Spleen (tissue), 13 donors: ENCODE measurements at regions of chr1 and their contacts with region 1.

Region 1: DNA sequence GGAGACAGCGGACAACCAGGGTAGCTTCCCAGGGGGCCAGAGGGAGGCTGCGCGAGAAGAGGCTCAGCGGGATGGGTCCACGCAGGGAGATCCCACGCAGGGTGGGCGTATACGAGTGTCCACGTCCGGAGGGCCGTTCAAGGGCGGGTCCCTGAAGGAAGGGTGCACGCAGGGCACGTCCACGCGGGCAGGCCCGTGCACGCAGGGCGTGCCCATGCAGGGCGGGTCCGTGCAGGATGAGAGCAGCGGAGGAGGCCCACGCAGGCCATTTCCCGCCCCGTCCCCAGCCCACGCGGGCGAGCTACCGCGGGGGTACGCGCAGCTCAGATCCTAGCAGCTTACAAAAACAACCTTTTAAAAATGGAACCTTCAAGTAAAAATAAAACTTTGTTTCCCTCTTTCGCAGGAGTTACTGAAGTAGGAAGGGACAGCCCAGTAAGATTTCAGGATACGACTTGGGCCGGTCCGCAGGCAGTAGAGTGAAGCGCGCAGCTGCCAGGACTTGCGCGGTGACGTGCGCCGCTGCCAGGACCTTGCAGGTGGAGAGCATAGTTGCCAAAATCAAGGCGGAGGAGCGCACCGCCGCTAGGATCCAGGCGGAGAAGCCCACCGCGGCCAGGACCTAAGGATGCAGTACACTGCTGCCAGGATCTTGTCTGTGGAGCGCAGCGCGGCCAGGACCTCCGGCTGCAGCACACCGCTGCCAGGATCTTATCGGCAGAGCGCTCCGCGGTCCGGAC is 416 bp upstream of the RNF187 start:
- DNase-seq: peak; percentile 96
- H3K4me3 ChIP-seq: peak overlapping the region; percentile 56 to 99 (median 90)
- H3K27ac ChIP-seq: peak overlapping the region; percentile 95 to 100 (median 100)
- H3K4me1 ChIP-seq: peaks cover 19 to 58% (median 53%) of the 10 kb centered on the region in 6 donors
- H3K27me3 ChIP-seq: no peaks in the 10 kb centered on the region
- CTCF ChIP-seq: peak in 2 of 11 experiments; percentile 12 to 20
- POLR2A ChIP-seq: peak; percentile 5 to 50 (median 29)

Region 2: GRCh38 chr1:227787513-227788270 is 699.1 kb before region 1 on chr1:
- intact Hi-C with region 1: loop called (anchors 10 kb)
- DNase-seq: peak; percentile 98
- H3K4me3 ChIP-seq: peak overlapping the region; percentile 44 to 77 (median 70)
- H3K27ac ChIP-seq: peak overlapping the region in 6 of 8 donors; percentile 10 to 72 (median 66)
- H3K4me1 ChIP-seq: peaks cover 12 to 38% (median 28%) of the 10 kb centered on the region in 6 donors
- H3K27me3 ChIP-seq: peaks cover 0 to 32% (median 0%) of the 10 kb centered on the region in 7 donors
- CTCF ChIP-seq: no peak
- POLR2A ChIP-seq: no peak

Region 3: DNA sequence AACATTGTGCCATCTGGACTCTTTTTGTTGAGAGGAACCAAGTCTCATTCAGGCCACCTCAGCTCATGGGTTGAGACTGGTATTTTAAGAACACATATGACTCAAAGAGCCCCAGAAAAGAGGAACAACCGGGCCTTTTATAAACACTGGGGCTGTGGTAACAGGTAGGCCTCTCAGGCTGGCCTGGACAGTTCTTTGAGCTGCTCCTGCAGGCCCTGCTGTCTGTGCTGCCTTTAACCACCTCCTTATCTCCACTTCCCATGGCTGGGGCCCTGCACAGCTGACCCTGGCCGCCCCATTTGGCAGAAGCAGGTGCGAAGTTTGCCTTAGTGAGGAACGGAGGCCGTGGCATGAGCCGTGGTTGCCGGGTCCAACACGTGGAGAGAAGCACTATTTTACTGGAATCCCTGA is 411.8 kb after region 1 on chr1:
- intact Hi-C with region 1: no loop called
- DNase-seq: peak; percentile 74
- H3K4me3 ChIP-seq: no peak overlapping the region
- H3K27ac ChIP-seq: no peak overlapping the region
- H3K4me1 ChIP-seq: peaks cover 0 to 24% (median 4%) of the 10 kb centered on the region in 6 donors
- H3K27me3 ChIP-seq: no peaks in the 10 kb centered on the region
- CTCF ChIP-seq: no peak
- POLR2A ChIP-seq: no peak